ENCODE measurements at regions of chr11 and their contacts with region 1.

Region 1: GRCh38 chr11:20002312-20003216 is 157.7 kb downstream of the DBX1 start:
- DNase-seq: peak; percentile 84 to 92
- H3K4me3 ChIP-seq: no peak overlapping the region
- H3K4me3 Mint-ChIP-seq: peak overlapping the region; percentile 52
- H3K27ac Mint-ChIP-seq: peak overlapping the region; percentile 65
- H3K4me1 ChIP-seq: peaks cover 48% of the 10 kb centered on the region
- H3K4me1 Mint-ChIP-seq: peaks cover 42% of the 10 kb centered on the region
- H3K27me3 ChIP-seq: no peaks in the 10 kb centered on the region
- H3K27me3 Mint-ChIP-seq: no peaks in the 10 kb centered on the region
- CTCF ChIP-seq: no peak

Region 2: GRCh38 chr11:19808076-19808911 is 194.3 kb before region 1 on chr11:
- CTCF ChIA-PET with region 1: no interaction called
- POLR2A ChIA-PET with region 1: no interaction called
- intact Hi-C with region 1: no loop called
- DNase-seq: no peak
- H3K4me3 ChIP-seq: no peak overlapping the region
- H3K4me3 Mint-ChIP-seq: no peak overlapping the region
- H3K27ac Mint-ChIP-seq: no peak overlapping the region
- H3K4me1 ChIP-seq: peaks cover 29% of the 10 kb centered on the region
- H3K4me1 Mint-ChIP-seq: peaks cover 24% of the 10 kb centered on the region
- H3K27me3 ChIP-seq: no peaks in the 10 kb centered on the region
- H3K27me3 Mint-ChIP-seq: no peaks in the 10 kb centered on the region
- CTCF ChIP-seq: peak in 1 of 2 experiments; percentile 9

Region 3: DNA sequence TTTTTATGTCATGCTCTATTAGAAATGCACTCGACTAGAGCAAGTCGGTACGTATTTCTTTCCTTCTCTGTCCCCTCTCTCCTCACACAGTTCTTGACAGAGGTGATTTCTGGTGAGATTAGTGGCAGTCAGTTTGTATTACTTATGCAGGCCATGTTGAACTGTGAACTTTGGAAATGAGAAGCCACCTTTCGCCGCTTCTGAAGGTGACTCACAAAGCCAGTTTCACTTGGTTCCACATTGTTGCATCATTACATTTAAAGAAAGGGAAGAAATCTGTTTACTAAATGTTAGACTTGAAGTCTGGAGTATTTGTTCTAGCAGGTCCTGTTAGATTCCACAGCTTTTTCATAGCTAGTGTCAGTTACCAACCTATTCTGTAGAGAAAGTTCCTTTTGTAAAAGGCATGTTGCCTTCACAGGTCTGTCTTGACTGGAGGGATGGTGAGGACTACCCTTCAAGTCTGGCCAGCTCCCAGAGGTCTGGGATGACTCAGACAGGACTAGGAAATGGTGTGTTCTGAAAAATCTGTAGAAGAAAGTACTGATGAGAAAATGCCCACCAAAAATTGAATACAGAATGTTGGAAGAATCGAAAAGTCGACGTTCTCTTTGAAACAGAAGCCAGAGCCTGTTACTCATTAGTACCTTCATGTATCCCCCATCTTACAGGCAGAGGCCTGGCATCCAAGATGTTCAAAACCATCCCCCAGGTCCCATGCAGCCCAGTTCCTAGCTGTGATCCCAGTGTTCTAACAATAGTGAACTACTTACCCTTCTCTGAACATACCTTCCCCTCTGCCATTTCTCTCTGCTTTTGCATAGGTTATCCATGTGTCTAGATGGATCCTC is 23.7 kb before region 1 on chr11:
- CTCF ChIA-PET with region 1: interaction called, 4 read pairs
- POLR2A ChIA-PET with region 1: no interaction called
- intact Hi-C with region 1: loop called (anchors 1 kb)
- DNase-seq: peak; percentile 63 to 74
- H3K4me3 ChIP-seq: no peak overlapping the region
- H3K4me3 Mint-ChIP-seq: peak overlapping the region; percentile 48
- H3K27ac Mint-ChIP-seq: peak overlapping the region; percentile 96
- H3K4me1 ChIP-seq: peaks cover 53% of the 10 kb centered on the region
- H3K4me1 Mint-ChIP-seq: peaks cover 52% of the 10 kb centered on the region
- H3K27me3 ChIP-seq: no peaks in the 10 kb centered on the region
- H3K27me3 Mint-ChIP-seq: no peaks in the 10 kb centered on the region
- CTCF ChIP-seq: no peak

Region 4: GRCh38 chr11:20013346-20014066 is 10.9 kb after region 1 on chr11:
- CTCF ChIA-PET with region 1: interaction called, 4 read pairs
- POLR2A ChIA-PET with region 1: no interaction called
- intact Hi-C with region 1: loop called (anchors 1 kb)
- DNase-seq: peak; percentile 50 to 53
- H3K4me3 ChIP-seq: no peak overlapping the region
- H3K4me3 Mint-ChIP-seq: peak overlapping the region; percentile 4
- H3K27ac Mint-ChIP-seq: peak overlapping the region; percentile 73
- H3K4me1 ChIP-seq: peaks cover 43% of the 10 kb centered on the region
- H3K4me1 Mint-ChIP-seq: peaks cover 25% of the 10 kb centered on the region
- H3K27me3 ChIP-seq: no peaks in the 10 kb centered on the region
- H3K27me3 Mint-ChIP-seq: no peaks in the 10 kb centered on the region
- CTCF ChIP-seq: peak in 1 of 2 experiments; percentile 23

Region 5: GRCh38 chr11:20035701-20036620 is 33.4 kb after region 1 on chr11:
- CTCF ChIA-PET with region 1: no interaction called
- POLR2A ChIA-PET with region 1: no interaction called
- intact Hi-C with region 1: loop called (anchors 1 kb)
- DNase-seq: no peak
- H3K4me3 ChIP-seq: no peak overlapping the region
- H3K4me3 Mint-ChIP-seq: no peak overlapping the region
- H3K27ac Mint-ChIP-seq: peak overlapping the region; percentile 91
- H3K4me1 ChIP-seq: peaks cover 85% of the 10 kb centered on the region
- H3K4me1 Mint-ChIP-seq: peaks cover 70% of the 10 kb centered on the region
- H3K27me3 ChIP-seq: no peaks in the 10 kb centered on the region
- H3K27me3 Mint-ChIP-seq: no peaks in the 10 kb centered on the region
- CTCF ChIP-seq: no peak